ENCODE measurements at regions of chr4 and their contacts with region 1.

Region 1: GRCh38 chr4:155038459-155038858 is 170.0 kb upstream of the NPY2R start:
- DNase-seq: no peak
- ATAC-seq: no peak
- H3K4me3 ChIP-seq: no peak overlapping the region
- H3K27ac ChIP-seq: no peak overlapping the region
- H3K4me1 ChIP-seq: no peaks in the 10 kb centered on the region
- H3K27me3 ChIP-seq: no peaks in the 10 kb centered on the region
- CTCF ChIP-seq: no peak
- EP300 ChIP-seq: no peak
- POLR2A ChIP-seq: no peak
- RAD21 ChIP-seq: no peak

Region 2: DNA sequence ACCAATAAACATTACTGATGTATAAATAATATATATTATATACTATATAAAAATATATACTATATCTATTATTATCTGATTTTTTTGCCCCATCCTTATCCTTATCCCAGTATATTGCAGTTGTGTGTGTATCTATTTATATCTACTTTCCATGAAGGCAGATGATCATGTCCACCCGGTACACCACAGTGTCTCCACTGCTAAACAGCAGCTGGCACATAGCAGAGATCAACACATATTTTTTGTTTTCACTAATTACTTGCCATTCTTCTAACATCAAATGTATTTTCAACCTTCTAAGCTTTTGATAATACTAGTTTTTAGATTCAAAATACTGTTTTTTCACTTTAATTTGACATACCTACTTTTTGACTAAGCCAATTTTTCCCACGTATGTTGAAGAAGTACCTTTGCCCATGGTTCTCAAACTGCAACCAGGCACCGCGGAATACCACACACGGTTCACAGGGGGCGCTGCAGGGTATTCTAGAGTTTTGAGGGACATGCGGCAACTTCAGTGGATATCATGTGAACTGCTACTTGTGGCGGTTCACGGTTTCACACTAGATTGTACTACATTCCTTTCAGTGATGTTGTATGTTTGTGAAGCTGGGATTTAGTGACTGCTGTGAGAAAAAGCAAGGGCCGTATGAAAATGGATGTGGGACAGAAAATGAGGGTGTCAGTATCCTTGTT is 12.5 kb before region 1 on chr4:
- CTCF ChIA-PET with region 1: interaction called, 25 read pairs
- POLR2A ChIA-PET with region 1: no interaction called
- RAD21 ChIA-PET with region 1: no interaction called
- SMC1A ChIA-PET with region 1: interaction called, 7 read pairs
- in situ Hi-C with region 1: no loop called
- intact Hi-C with region 1: no loop called
- DNase-seq: no peak
- ATAC-seq: peak; percentile 95
- H3K4me3 ChIP-seq: no peak overlapping the region
- H3K27ac ChIP-seq: no peak overlapping the region
- H3K4me1 ChIP-seq: no peaks in the 10 kb centered on the region
- H3K27me3 ChIP-seq: no peaks in the 10 kb centered on the region; a peak in 1 of 4 replicates
- CTCF ChIP-seq: peak; percentile 58 to 68 (median 58)
- EP300 ChIP-seq: no peak
- POLR2A ChIP-seq: no peak
- RAD21 ChIP-seq: peak; percentile 61

Region 3: DNA sequence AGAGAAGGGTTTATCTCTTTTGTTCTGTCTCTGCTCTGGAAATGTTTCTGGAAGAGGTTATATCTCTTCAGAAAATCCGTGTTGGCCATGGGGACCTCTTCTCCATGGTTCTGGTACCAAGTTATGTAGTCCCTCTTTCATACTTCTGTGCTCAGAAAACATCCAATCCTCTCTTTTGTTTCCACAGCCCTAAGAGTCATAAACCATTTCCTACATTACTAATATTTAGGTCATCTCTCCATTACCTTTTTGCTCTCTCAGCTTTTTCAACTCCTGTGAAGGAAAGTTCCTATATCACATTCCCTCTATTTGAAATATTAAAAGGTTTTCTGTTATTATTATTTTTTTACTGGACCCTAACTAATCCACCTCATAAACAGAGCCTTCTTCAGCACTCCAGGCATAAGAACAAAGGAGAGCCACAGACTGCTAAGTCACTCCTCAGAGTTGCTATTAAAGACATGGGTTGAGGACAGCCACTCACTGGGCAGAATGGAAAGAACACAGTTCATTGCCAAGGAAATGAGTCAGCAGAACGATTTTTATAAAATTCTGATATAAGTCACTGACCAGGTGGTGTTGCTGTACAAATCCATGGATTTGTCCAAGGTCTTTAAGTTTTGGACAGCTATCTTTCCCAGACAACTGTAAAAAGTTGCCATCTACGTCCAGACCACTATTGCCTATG is 47.5 kb after region 1 on chr4:
- CTCF ChIA-PET with region 1: no interaction called
- POLR2A ChIA-PET with region 1: no interaction called
- RAD21 ChIA-PET with region 1: no interaction called
- SMC1A ChIA-PET with region 1: no interaction called
- in situ Hi-C with region 1: no loop called
- intact Hi-C with region 1: no loop called
- DNase-seq: no peak
- ATAC-seq: no peak
- H3K4me3 ChIP-seq: no peak overlapping the region
- H3K27ac ChIP-seq: no peak overlapping the region
- H3K4me1 ChIP-seq: no peaks in the 10 kb centered on the region
- H3K27me3 ChIP-seq: no peaks in the 10 kb centered on the region
- CTCF ChIP-seq: no peak
- EP300 ChIP-seq: no peak
- POLR2A ChIP-seq: no peak
- RAD21 ChIP-seq: no peak

Region 4: GRCh38 chr4:155161357-155161756 is 122.9 kb after region 1 on chr4:
- CTCF ChIA-PET with region 1: no interaction called
- POLR2A ChIA-PET with region 1: no interaction called
- RAD21 ChIA-PET with region 1: no interaction called
- SMC1A ChIA-PET with region 1: no interaction called
- in situ Hi-C with region 1: no loop called
- intact Hi-C with region 1: no loop called
- DNase-seq: no peak
- ATAC-seq: no peak
- H3K4me3 ChIP-seq: no peak overlapping the region
- H3K27ac ChIP-seq: no peak overlapping the region
- H3K4me1 ChIP-seq: no peaks in the 10 kb centered on the region
- H3K27me3 ChIP-seq: no peaks in the 10 kb centered on the region
- CTCF ChIP-seq: no peak
- EP300 ChIP-seq: no peak
- POLR2A ChIP-seq: no peak
- RAD21 ChIP-seq: no peak

Region 5: GRCh38 chr4:155248002-155248896 is 209.8 kb after region 1 on chr4:
- CTCF ChIA-PET with region 1: no interaction called
- POLR2A ChIA-PET with region 1: no interaction called
- RAD21 ChIA-PET with region 1: no interaction called
- SMC1A ChIA-PET with region 1: no interaction called
- in situ Hi-C with region 1: no loop called
- intact Hi-C with region 1: no loop called
- DNase-seq: no peak
- ATAC-seq: no peak
- H3K4me3 ChIP-seq: no peak overlapping the region
- H3K27ac ChIP-seq: no peak overlapping the region
- H3K4me1 ChIP-seq: no peaks in the 10 kb centered on the region
- H3K27me3 ChIP-seq: no peaks in the 10 kb centered on the region
- CTCF ChIP-seq: no peak
- EP300 ChIP-seq: no peak
- POLR2A ChIP-seq: no peak
- RAD21 ChIP-seq: no peak